Astrocyte of the cerebellum (primary cell): ENCODE measurements at regions of chr21 and their contacts with region 1.

Region 1: GRCh38 chr21:28336314-28336713 is 656.4 kb downstream of the LTN1 start:
- DNase-seq: peak; percentile 63
- H3K4me3 ChIP-seq: no peak overlapping the region
- CTCF ChIP-seq: peak; percentile 54

Region 2: DNA sequence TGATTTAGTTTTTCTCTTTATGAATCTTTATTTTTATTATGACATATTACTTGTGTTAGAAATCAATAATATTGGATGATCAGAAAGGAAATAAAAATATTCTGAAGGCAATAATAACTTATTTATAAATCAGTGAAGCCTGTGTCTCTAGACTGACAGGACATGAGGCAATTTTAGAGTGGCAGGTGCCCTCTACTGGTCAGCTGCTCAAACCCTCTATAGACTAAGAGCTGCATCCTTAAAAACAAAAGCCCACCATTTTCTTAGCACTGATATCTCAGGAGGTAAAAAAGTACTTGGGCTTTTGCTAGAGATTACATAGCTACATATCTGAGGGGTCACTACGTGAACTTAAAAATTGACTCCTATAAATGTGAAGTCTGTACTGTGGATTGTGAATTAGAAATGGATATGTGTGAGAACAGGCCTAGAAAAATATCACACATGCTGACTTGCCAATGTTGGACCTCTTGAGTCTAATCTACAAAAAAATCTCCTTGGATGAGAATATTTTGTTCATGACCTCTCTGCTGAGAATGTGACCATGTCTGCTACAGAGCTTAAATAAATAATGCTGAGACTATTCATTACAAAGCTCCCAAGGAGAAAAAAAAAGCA is 771.5 kb before region 1 on chr21:
- in situ Hi-C with region 1: loop called (anchors 25 kb)
- DNase-seq: no peak
- H3K4me3 ChIP-seq: no peak overlapping the region
- CTCF ChIP-seq: peak; percentile 85

Region 3: GRCh38 chr21:28427394-28428022 is 91.2 kb after region 1 on chr21:
- in situ Hi-C with region 1: no loop called
- DNase-seq: no peak
- H3K4me3 ChIP-seq: no peak overlapping the region
- CTCF ChIP-seq: no peak